ENCODE measurements at regions of chr5 and their contacts with region 1.

Region 1: DNA sequence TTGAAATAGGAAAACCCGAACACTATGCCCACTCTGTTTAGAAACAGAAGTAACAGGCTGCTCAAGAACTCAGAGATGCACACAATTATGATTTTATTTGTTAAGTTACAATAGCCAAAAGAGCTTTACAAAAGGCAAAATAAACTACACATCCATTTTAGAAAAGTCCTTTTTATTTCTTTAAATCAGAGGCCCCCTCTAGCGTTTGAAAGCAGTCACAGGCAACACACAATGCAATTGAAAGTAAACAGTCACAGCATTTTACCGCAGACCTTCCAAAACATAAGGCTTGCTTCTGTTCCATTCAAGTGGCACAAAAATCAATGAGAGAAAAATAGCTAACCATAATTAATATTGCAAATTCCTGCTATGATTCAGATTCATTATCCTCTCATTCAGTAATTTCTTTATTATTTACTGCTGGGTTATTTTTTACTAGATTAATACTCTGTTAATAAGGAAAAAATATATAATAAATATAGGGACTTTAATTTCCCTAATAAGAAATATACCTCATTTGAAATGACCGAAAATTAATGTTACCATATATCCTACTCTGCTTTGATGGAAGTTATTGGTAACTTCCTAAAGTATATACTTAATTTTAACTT is 78.3 kb downstream of the CEP120 start:
- DNase-seq: no peak
- ATAC-seq: peak; percentile 41

Region 2: DNA sequence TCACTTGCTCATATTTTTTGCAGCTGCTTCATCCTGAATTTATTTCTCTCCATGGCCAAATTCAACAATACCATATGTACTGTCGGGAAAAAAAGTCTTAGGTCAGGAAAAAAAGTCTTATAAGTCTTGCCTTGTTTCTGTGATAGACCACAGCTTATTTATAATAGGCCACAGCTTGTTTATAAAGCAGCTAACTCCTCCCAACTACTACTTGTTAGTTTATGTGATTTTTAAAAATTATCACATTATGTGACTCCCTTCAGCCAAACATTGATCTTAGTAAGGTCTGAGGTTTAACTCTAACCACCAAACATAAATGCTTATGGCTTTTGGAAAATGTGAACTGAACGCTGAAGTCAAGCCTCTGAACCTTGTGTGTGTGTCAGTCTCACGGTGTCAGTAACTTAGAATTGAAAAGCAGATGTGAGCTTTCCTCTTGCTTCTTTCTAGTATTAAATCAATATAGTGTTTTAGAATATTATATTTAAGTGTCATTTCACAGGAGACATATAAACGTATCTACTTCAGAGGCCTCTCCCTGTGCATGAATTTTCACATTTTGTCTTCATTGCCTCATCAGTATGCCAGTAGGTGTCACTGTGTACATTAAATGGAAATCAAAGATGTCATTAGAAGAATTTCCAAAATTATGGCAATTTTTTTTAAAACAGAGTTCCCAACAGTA is 448.2 kb before region 1 on chr5:
- intact Hi-C with region 1: loop called in 1 of 2 experiments (anchors 10 kb)
- DNase-seq: no peak
- ATAC-seq: no peak

Measured in left colon (tissue), 2 donors.